BJ (cell line): ENCODE measurements at regions of chr10 and their contacts with region 1.

Region 1: GRCh38 chr10:88386821-88387773 is 196.0 kb downstream of the RNLS start:
- DNase-seq: no peak
- H3K4me3 ChIP-seq: no peak overlapping the region
- H3K27me3 ChIP-seq: no peaks in the 10 kb centered on the region
- CTCF ChIP-seq: no peak

Region 2: DNA sequence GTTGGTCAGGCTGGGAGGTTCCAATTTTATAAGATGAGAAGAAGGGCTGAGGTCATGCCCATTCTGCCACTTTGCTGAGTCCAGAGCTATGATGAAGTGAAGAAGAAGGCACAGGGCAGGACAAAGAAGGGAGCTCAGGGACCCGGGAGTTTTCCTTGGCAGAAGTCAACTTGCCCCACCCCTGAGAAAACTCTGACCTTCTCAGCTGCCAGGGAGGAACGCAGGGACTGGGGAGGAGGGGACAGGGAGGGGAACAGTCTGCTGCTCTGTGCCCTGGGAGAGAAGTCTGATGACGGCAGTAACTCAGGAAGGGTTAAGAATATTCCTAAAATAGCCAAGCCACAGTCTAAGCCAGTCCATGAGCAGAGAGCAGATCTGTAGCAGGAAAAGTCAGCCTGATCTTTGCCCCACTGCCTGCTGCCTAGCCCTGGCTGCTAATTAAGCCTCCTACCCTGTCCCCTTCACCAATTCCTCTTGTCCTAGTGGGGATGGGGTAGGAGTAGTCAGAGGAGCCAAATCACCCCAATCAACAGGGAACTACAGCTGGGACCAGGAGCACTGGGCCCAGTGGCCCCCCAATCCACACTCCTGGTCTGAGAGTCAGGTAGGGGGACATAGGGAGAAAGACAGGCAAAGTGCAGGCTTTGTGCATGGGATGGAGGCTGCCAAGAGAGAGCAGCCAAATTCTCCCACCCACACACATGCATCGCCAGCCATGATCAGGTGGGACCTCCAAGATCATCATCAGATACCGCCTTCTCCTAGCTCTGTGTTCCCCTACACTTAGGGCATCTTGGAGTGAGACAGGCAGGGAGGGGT is 1406.9 kb before region 1 on chr10:
- CTCF ChIA-PET with region 1: no interaction called
- POLR2A ChIA-PET with region 1: no interaction called
- DNase-seq: no peak
- H3K4me3 ChIP-seq: no peak overlapping the region
- H3K27me3 ChIP-seq: no peaks in the 10 kb centered on the region
- CTCF ChIP-seq: no peak

Region 3: DNA sequence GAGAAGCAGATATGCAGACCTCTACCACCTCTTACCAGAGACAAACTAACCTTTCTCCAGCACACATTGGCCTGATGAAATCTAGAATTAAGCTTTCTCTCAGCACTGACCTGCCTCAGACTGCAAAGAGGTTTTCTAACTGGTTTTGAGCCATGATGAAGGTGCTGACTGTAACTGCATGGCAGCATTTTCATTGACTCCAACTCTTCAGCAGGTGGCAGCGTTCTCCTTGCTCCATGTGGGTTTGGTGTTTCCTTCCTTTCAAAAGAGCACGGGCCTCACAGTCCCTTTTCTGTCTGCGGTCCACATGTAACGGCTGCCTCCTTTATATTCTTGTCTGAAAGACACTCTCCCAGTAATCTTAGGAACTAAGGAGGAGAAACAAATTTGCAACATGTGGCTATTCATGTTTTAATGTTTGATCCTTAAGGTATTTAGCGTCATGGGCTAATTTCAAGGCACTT is 536.3 kb before region 1 on chr10:
- CTCF ChIA-PET with region 1: interaction called, 39 read pairs
- POLR2A ChIA-PET with region 1: no interaction called
- DNase-seq: no peak
- H3K4me3 ChIP-seq: no peak overlapping the region
- H3K27me3 ChIP-seq: no peaks in the 10 kb centered on the region
- CTCF ChIP-seq: peak; percentile 79

Region 4: GRCh38 chr10:87861953-87862678 is 525.0 kb before region 1 on chr10:
- CTCF ChIA-PET with region 1: interaction called, 45 read pairs
- POLR2A ChIA-PET with region 1: no interaction called
- DNase-seq: peak; percentile 73
- H3K4me3 ChIP-seq: peak overlapping the region; percentile 84
- H3K27me3 ChIP-seq: no peaks in the 10 kb centered on the region
- CTCF ChIP-seq: no peak

Region 5: GRCh38 chr10:88437411-88437810 is 50.3 kb after region 1 on chr10:
- CTCF ChIA-PET with region 1: no interaction called
- POLR2A ChIA-PET with region 1: interaction called, 11 read pairs
- DNase-seq: no peak
- H3K4me3 ChIP-seq: no peak overlapping the region
- H3K27me3 ChIP-seq: no peaks in the 10 kb centered on the region
- CTCF ChIP-seq: no peak

Region 6: DNA sequence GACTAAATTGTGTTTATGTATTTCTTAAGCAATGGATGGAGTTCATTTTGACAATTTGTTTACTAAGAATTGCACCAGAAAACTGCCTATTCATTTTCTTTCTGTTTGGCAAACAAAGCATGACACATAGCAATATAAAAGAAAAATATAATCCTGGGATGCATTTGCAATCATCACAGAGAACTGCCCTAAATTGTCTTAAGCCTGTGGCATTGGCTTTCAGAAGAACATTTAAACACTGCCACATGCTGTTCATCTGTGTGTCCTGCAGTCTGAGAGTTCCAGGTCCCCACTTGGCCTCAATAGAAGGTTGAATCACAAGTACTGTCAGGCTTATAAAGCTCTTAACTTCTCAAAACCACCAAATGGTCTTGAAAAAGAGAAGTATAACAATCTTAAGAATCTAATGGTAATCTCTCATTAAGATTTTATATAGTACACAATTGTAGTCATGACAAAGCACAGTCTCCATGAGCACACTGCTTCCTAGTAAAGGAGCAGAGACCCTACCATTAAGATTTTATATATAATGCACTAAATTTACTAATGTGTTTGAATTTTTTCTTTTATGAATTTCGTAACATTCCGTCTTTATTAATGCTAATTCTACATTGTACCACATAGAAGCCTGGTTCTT is 166.1 kb after region 1 on chr10:
- CTCF ChIA-PET with region 1: interaction called, 10 read pairs
- POLR2A ChIA-PET with region 1: no interaction called
- DNase-seq: peak; percentile 56
- H3K4me3 ChIP-seq: no peak overlapping the region
- H3K27me3 ChIP-seq: no peaks in the 10 kb centered on the region
- CTCF ChIP-seq: peak; percentile 84